ENCODE measurements at regions of chr15 and their contacts with region 1.

Region 1: DNA sequence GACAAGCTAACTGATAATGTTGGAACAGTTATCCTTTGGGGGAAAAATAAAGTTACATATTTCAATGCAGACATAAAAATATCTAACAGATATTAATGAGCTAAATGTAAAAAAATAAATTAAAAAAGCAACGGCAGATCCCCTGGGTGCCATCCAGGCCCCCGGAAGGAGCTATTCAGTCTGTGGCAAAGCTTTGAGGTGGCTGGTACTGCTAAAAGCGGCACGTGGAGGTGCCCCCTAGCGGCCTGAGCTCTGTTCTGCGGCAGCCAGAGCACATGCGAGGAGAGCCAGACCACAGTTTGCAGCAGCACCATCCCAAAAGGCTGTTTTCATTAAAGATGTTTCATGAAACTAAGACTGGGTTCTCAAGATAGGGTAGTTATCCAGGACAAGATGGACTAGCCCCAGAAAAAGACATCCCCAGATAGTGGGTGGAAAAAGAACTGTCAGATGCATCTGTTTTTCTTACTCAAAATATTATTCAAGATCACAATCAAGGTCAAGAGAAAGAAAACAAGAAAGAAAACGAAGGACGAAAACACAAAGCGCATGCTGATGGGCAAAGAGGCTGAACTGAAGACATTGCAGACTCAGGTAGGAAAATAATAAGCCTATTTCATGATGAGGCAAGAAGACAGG is 18.7 kb downstream of the AP3S2 start:
- DNase-seq: peak; percentile 69
- H3K4me3 ChIP-seq: no peak overlapping the region
- H3K27ac ChIP-seq: no peak overlapping the region
- H3K4me1 ChIP-seq: no peaks in the 10 kb centered on the region
- H3K27me3 ChIP-seq: no peaks in the 10 kb centered on the region
- CTCF ChIP-seq: peak; percentile 96 to 98
- POLR2A ChIP-seq: no peak

Region 2: DNA sequence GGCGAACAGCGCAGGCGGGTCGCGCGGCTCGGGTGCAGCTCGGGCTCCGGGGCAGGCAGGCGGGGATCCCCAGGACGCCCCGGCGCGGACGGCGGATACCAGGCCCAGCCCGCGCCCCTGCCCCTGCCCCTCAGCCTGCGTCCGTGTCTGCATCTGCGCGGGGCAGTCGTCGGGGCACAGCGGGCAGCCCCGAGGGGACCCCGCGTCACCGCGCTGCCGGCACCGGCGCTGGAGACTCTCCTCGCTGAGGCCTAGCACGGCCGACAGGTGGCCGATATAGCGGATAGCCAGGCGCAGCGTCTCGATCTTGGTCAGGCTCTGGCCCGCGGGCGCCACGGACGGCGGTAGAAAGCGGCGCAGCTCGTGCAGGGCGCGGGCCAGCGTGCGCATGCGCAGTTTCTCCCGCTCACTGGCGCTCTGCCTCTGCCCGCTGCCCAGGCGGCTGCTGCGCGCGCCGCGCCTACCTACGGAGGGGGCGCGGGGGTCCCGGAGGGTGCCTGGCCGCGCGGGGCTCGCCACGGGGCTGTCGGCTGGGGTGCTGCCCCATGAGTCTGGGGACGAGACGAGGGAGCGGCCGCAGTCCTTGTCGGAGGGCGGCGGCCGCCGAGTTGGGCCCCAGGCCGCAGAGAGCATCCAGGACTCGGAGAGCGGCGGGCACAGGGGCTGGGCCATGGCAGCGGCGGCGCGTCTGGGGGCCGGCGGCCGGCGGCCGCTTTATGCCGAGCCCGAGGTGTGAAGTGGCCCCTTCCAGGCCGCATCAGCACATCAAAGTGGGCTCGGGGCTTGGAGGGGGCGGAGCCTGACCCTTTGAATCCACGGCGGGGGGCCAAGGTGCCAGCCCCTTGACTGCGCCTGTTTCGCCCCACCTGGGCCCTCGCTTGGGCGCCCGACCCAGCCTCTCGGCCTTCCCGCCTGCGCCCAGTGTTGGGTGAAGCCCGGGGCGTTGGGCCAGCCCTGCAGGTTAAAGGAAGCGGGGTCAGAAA is 124.2 kb before region 1 on chr15 and contains the start of gene MESP1:
- CTCF ChIA-PET with region 1: interaction called, 599 read pairs
- POLR2A ChIA-PET with region 1: no interaction called
- dilution Hi-C with region 1: loop called (anchors 25 kb)
- intact Hi-C with region 1: no loop called
- DNase-seq: peak; percentile 91
- H3K4me3 ChIP-seq: peak within 1 kb of the TSS; percentile 38 to 48 (median 46)
- H3K27ac ChIP-seq: no peak within 1 kb of the TSS
- H3K4me1 ChIP-seq: peaks cover 6% of the 10 kb centered on the region
- H3K27me3 ChIP-seq: peaks cover 3 to 12% of the 10 kb centered on the region in 2 experiments
- CTCF ChIP-seq: peak; percentile 66 to 90
- POLR2A ChIP-seq: peak; percentile 42
- total RNA-seq, gene MESP1: 1.0 and 1.7 TPM in 2 replicates

Region 3: GRCh38 chr15:89781891-89782618 is 93.0 kb before region 1 on chr15:
- CTCF ChIA-PET with region 1: interaction called, 15 read pairs
- POLR2A ChIA-PET with region 1: interaction called, 4 read pairs
- dilution Hi-C with region 1: no loop called
- intact Hi-C with region 1: no loop called
- DNase-seq: no peak
- H3K4me3 ChIP-seq: no peak overlapping the region
- H3K27ac ChIP-seq: no peak overlapping the region
- H3K4me1 ChIP-seq: peaks cover 4% of the 10 kb centered on the region
- H3K27me3 ChIP-seq: no peaks in the 10 kb centered on the region
- CTCF ChIP-seq: no peak
- POLR2A ChIP-seq: no peak

Region 4: DNA sequence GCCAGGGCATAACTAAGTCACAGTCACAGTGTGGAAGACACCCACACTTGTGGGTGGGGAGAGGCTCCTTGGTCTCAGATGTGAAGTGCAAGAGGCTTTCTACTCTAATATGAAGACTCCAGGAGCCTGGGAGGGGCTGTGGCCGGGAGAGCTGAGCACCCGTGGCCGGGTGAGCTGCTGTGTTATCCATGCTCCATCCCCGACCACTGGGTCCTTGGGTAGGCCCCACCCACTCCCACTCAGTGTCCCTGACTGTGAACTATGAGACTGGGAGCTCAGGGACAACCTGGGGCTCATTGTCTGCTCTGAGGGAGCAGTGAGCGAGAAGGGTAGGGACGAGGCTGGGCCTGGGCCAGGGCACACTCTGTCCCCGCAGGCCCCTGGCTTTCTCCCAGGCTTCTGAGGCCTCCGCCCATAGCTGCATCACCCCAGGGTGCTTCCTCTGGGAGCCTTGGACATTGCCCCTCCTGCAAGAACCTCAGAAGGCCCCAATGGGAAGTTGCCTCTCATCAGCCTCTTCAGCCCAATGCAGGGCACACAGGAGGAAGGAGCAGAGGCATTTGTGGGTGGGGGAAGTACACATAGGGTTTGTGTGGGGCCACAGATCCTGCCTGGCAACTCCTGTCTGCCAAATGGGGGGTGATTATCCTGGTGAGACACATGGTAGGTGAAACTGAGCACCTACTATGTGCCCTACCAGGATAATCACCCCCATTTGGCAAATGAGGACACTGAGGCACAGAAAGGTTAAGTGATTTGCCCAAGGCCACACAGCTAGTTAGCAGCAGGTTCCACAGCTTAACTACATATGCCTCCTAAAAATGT is 62.8 kb before region 1 on chr15:
- CTCF ChIA-PET with region 1: interaction called, 67 read pairs
- POLR2A ChIA-PET with region 1: interaction called, 8 read pairs
- dilution Hi-C with region 1: no loop called
- intact Hi-C with region 1: loop called (anchors 2 kb)
- DNase-seq: no peak
- H3K4me3 ChIP-seq: no peak overlapping the region
- H3K27ac ChIP-seq: no peak overlapping the region
- H3K4me1 ChIP-seq: peaks cover 36% of the 10 kb centered on the region
- H3K27me3 ChIP-seq: no peaks in the 10 kb centered on the region
- CTCF ChIP-seq: no peak
- POLR2A ChIP-seq: no peak

Region 5: GRCh38 chr15:89836255-89837133 is 38.6 kb before region 1 on chr15:
- CTCF ChIA-PET with region 1: interaction called, 40 read pairs
- POLR2A ChIA-PET with region 1: no interaction called
- dilution Hi-C with region 1: no loop called
- intact Hi-C with region 1: no loop called
- DNase-seq: no peak
- H3K4me3 ChIP-seq: no peak overlapping the region
- H3K27ac ChIP-seq: peak overlapping the region; percentile 2
- H3K4me1 ChIP-seq: peaks cover 18% of the 10 kb centered on the region
- H3K27me3 ChIP-seq: no peaks in the 10 kb centered on the region
- CTCF ChIP-seq: no peak
- POLR2A ChIP-seq: no peak

Region 6: DNA sequence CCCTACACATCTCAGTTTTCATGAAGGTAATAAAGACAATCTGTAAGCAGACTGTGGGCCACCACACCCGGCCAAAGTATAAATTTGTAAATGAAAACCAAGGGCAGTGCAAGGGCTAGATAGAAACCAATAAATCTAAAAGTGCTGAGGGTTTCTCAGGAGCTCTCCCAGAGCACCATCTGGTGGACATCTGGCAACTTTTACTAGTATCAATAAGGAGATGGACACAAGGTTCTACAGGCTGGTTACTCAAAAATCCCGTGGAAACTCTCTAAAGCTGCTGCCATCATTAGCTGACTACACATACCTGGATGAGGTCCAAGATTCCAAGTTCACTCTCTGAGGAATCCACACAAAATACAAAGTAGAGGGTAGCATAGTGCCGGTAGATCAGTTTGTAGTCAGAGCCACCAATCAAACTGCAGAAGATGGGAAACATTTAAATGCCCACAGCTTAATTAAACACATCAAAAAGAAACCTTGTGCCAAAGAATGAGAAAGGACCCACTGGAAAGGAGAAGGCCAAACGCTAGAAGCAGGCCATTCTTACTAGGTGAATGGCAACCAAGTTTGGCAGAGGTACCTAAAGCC is 13.3 kb after region 1 on chr15:
- CTCF ChIA-PET with region 1: interaction called, 58 read pairs
- POLR2A ChIA-PET with region 1: no interaction called
- dilution Hi-C with region 1: no loop called
- intact Hi-C with region 1: no loop called
- DNase-seq: peak; percentile 56
- H3K4me3 ChIP-seq: no peak overlapping the region
- H3K27ac ChIP-seq: no peak overlapping the region
- H3K4me1 ChIP-seq: peaks cover 5% of the 10 kb centered on the region
- H3K27me3 ChIP-seq: no peaks in the 10 kb centered on the region
- CTCF ChIP-seq: peak; percentile 38 to 55
- POLR2A ChIP-seq: no peak

Region 7: GRCh38 chr15:89936051-89936785 is 61.2 kb after region 1 on chr15:
- CTCF ChIA-PET with region 1: no interaction called
- POLR2A ChIA-PET with region 1: no interaction called
- dilution Hi-C with region 1: no loop called
- intact Hi-C with region 1: no loop called
- DNase-seq: no peak
- H3K4me3 ChIP-seq: no peak overlapping the region
- H3K27ac ChIP-seq: no peak overlapping the region
- H3K4me1 ChIP-seq: no peaks in the 10 kb centered on the region
- H3K27me3 ChIP-seq: peaks cover 0 to 6% of the 10 kb centered on the region in 2 experiments
- CTCF ChIP-seq: no peak
- POLR2A ChIP-seq: no peak

Measured in endothelial cell of umbilical vein (primary cell).